ENCODE measurements at regions of chr14 and their contacts with region 1.

Region 1: DNA sequence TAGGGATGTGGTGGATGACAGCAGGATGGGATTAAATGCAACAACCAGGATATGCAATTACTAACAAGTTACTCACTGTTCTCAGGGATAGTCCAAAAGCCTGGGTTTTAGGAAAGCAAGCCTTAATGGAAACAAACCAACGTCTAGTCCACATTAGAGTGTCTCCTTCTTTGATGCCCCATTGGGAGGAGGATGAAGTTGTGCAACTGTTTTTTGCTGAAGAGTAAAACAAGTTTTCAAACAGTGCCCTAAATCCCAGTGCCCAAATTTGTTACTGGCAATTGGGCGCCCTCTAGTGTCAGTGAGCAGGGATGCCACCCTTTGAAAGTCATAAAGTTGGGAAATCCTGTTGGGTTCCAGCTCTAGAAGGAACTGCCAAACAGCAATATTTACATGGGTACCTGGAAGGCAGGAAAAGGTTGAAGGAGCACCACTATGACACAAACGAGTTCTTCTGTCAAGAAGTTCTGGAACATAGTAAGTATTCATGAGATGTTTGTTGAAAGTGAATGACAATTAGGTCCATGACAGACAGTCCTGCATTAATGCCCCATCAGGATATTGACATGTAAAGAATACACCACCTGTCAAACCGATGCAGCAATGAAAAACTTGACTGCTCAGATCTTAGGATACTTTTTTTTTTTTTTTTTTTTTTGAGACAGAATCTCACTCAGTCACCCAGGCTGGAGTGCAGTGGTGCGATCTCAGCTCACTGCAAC is 11.1 kb upstream of the DPF3 start:
- DNase-seq: no peak

Region 2: GRCh38 chr14:72516936-72517700 is 387.9 kb before region 1 on chr14:
- intact Hi-C with region 1: loop called (anchors 5 kb)
- DNase-seq: peak; percentile 88

Region 3: GRCh38 chr14:72926292-72927028 is 21.5 kb after region 1 on chr14 and contains the start of gene DCAF4:
- intact Hi-C with region 1: no loop called
- DNase-seq: peak; percentile 98
- total RNA-seq, gene DCAF4: 7.4 to 11.3 TPM